ENCODE measurements at regions of chr1 and their contacts with region 1.

Region 1: DNA sequence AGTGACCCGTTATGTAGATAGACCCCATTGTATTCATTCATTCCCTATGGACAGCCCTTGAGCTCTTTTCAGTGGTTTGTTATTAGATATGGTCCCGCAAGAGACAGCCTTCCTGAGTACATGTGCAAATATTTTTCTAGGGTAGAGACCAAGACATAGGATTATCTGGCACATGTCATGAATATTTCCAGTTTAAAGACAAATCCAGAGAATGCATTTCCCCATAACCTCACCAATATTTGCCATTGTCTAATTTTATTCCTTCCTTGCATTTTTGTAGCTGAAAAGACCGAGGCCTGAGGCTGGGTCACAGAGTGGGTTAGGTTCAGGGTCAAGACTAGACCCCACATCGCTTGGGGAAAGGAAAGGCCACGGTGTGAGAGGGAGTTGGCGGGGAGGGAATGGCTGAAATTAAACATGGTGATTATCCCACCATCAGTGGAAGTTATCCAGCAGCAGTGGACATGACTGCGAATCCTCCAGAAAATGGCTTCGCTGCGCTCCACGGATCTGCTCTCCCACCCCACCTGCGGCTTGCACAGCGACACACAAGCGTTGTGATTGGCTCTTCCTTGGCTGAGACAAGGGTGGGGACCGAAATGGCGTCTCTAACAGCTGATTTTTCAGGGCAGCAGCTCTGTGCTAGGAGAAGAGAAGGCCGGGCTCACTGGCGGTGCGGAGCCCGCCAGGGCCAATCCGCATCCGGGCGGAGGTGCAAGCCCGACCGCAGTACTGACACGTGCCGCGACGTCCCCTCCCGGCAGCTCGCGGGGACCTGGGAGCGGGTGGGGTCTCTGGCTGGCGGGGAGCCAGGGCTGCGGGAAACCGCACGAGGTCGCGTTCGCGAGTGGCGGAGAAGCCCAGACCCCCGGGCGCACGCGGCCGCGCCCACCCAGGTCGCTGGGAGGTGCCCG is 16.1 kb upstream of the STMN1 start:
- DNase-seq: no peak
- H3K4me3 Mint-ChIP-seq: peak overlapping the region; percentile 40
- H3K27ac Mint-ChIP-seq: no peak overlapping the region
- H3K4me1 Mint-ChIP-seq: no peaks in the 10 kb centered on the region
- H3K27me3 Mint-ChIP-seq: peaks cover 39% of the 10 kb centered on the region
- CTCF ChIP-seq: no peak

Region 2: GRCh38 chr1:25786887-25787759 is 135.2 kb before region 1 on chr1:
- CTCF ChIA-PET with region 1: no interaction called
- POLR2A ChIA-PET with region 1: no interaction called
- intact Hi-C with region 1: no loop called
- DNase-seq: no peak
- H3K4me3 Mint-ChIP-seq: no peak overlapping the region
- H3K27ac Mint-ChIP-seq: no peak overlapping the region
- H3K4me1 Mint-ChIP-seq: no peaks in the 10 kb centered on the region
- H3K27me3 Mint-ChIP-seq: no peaks in the 10 kb centered on the region
- CTCF ChIP-seq: no peak

Region 3: GRCh38 chr1:25904943-25905679 is 17.2 kb before region 1 on chr1:
- CTCF ChIA-PET with region 1: interaction called, 4 read pairs
- POLR2A ChIA-PET with region 1: interaction called, 10 read pairs
- intact Hi-C with region 1: no loop called
- DNase-seq: peak; percentile 91
- H3K4me3 Mint-ChIP-seq: peak overlapping the region; percentile 91
- H3K27ac Mint-ChIP-seq: peak overlapping the region; percentile 93
- H3K4me1 Mint-ChIP-seq: peaks cover 6% of the 10 kb centered on the region
- H3K27me3 Mint-ChIP-seq: no peaks in the 10 kb centered on the region
- CTCF ChIP-seq: no peak

Region 4: GRCh38 chr1:25944986-25945385 is 22.7 kb after region 1 on chr1:
- CTCF ChIA-PET with region 1: no interaction called
- POLR2A ChIA-PET with region 1: no interaction called
- intact Hi-C with region 1: loop called (anchors 1 kb)
- DNase-seq: no peak
- H3K4me3 Mint-ChIP-seq: no peak overlapping the region
- H3K27ac Mint-ChIP-seq: no peak overlapping the region
- H3K4me1 Mint-ChIP-seq: no peaks in the 10 kb centered on the region
- H3K27me3 Mint-ChIP-seq: no peaks in the 10 kb centered on the region
- CTCF ChIP-seq: no peak